ENCODE measurements at regions of chr7 and their contacts with region 1.

Region 1: DNA sequence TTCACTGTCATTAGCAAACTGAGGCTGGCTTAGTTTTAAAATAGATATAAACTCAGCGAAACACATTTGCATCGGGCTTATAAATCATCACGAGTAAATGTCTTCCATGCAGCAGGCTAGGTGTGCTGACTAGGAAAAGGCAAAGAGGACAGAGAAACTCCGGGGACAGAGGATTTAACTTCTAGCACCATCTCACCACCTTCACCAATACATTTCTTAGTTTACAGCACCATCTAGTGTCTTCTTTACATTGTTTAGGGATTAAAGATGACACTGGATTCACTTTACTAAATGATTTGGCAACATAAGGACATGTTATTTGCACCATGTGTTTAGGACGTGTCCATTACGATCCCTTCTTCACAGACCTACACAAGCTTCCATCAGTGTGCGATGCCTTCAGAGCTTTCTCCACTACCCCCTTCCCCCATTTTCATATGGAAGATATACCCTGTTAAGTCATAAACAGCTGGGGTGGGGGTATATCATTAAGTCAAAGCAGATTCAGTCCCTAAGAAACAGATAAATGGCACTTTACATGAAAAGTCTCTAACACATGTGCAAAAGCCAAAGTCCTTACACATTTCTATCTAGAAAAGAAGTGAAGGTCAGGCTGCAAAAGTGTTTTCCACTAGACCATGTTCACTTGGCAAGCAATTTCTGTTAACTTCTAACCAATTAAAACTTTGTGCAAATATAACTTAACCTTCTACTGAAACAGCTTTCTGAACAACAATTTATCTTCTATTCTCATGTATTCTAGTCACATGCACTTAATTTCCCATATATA is 103.3 kb downstream of the GRB10 start:
- DNase-seq: no peak
- ATAC-seq: peak; percentile 53
- H3K4me3 ChIP-seq: no peak overlapping the region
- H3K4me1 ChIP-seq: peaks cover 3% of the 10 kb centered on the region
- CTCF ChIP-seq: no peak

Region 2: DNA sequence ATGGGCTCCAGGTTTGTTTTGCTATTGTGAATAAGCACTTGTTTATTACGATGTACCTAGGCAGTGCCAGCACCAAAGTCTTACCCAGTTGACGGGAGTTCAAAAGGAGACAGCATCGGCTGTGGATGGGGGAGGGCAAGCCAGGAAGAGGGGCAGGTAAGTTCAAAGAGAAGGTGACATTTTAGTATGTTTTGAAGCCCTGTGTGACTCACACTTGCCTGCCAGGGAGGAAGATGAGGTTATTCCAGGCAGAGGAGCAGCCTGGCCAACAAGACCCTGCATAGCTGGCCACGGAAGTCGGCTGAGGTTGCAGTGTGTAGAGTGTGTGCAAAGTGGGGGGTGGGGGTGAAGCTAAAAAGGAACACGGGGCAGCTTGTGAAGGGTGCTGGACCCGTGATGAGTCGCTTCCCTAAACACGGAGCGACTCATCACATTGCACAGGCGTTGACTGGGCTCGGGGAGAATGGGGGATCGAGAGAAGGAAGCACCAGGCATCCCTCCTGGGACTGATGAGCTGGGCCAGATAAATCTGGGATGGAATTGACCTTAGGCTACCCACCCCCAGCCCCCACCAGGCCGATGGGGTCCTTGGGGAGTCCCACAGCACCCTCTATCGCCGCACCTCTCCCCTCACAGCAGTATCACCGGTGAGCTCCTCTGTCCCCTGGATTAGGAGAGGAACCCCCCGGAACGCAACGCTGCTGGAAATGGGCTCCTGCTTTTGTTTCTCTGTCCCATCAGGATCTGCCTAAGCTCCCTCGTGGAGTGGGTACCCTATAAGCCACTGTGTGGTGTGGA is 472.8 kb before region 1 on chr7:
- intact Hi-C with region 1: loop called in 1 of 2 experiments (anchors 10 kb)
- DNase-seq: peak in 1 of 3 donors; percentile 65
- ATAC-seq: peak; percentile 58
- H3K4me3 ChIP-seq: no peak overlapping the region
- H3K4me1 ChIP-seq: no peaks in the 10 kb centered on the region
- CTCF ChIP-seq: no peak

Region 3: DNA sequence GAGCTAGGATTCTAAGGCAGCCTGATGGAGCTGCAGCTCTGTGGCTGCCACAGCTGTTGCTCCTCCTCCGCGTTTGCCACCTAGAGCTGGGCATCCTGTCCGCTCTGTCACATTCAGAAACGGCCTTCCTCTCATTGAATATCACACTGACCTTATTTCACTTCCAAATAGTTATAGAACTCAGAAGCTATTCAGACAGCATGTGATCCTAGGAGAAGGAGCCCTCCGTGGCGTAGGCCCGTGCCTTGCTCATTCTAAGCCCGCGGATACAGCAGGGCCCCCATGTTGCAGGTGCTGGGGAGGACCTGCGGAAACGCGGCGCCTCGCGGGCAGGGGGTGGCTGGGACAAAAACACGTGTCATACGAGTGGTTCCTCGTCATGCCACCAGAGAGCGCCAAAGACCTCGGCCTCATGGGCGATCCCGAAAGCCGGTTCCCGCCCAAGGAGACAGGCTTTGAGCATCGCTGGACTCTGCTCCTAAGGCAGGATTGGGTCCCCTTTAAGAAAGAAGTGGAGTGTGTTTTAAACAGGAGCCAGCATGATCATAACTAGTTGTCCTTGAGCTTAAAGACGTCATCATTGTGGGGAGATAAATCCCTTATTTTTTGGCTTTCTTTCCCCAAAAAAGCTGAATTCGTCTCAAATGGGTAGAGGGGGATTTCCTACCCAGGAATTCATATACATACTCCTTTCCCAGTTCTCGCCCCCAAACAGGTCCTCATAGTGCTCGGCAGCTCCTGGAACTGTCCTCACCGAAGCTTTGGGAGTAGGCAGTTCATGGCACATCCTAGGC is 211.4 kb before region 1 on chr7:
- intact Hi-C with region 1: loop called (anchors 5 to 10 kb)
- DNase-seq: peak; percentile 76 to 87 (median 86)
- ATAC-seq: peak; percentile 95
- H3K4me3 ChIP-seq: no peak overlapping the region
- H3K4me1 ChIP-seq: peaks cover 4% of the 10 kb centered on the region
- CTCF ChIP-seq: peak; percentile 85

Region 4: DNA sequence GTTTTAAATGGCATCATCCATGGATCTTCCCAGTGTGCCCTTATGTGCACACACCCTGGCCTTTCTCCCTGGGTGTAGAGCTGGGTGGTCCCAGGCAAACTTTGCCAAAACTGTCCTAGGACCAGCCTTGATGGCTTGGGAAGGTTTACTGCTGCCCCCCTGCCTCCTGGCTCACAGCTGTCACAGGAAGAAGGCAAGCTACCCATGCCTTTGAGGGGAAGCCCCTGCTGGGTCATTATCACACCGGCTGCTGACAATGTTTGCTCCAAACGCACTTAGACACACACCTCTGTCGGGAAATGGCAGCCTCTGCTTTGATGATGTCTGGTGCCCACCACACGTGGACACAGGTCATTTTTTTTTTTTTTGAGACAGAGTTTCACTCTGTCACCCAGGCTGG is 204.1 kb before region 1 on chr7:
- intact Hi-C with region 1: loop called in 1 of 2 experiments (anchors 10 kb)
- DNase-seq: no peak
- ATAC-seq: peak; percentile 16
- H3K4me3 ChIP-seq: no peak overlapping the region
- H3K4me1 ChIP-seq: no peaks in the 10 kb centered on the region
- CTCF ChIP-seq: no peak

Measured in mucosa of descending colon (tissue), 3 donors.